AG04449 (cell line): ENCODE measurements at regions of chr5 and their contacts with region 1.

Region 1: DNA sequence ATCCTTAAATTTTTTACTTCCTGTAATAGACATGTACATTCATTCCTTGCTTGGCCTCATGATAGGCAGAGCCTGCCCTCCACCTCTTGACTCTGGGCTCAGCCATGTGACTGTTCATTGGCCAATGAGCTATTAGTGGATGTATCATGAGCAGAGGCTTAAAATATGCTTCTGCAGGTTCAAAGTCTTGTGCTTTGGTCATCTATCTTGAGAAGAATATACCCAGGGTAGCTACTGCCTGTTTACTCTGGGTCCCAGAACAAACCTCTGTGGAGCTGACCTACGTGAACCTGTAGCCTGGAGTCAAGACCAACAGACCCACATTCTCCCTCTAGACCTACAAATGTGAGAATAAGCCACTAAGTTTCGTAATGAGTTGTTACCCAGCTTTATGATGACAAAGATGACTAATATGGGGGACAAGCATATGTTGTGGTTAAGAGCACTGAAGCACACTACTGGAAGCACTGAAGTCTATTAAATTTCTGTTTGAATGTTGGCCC is 244.4 kb downstream of the MAST4 start:
- DNase-seq: no peak
- H3K4me3 ChIP-seq: no peak overlapping the region
- CTCF ChIP-seq: no peak

Region 2: DNA sequence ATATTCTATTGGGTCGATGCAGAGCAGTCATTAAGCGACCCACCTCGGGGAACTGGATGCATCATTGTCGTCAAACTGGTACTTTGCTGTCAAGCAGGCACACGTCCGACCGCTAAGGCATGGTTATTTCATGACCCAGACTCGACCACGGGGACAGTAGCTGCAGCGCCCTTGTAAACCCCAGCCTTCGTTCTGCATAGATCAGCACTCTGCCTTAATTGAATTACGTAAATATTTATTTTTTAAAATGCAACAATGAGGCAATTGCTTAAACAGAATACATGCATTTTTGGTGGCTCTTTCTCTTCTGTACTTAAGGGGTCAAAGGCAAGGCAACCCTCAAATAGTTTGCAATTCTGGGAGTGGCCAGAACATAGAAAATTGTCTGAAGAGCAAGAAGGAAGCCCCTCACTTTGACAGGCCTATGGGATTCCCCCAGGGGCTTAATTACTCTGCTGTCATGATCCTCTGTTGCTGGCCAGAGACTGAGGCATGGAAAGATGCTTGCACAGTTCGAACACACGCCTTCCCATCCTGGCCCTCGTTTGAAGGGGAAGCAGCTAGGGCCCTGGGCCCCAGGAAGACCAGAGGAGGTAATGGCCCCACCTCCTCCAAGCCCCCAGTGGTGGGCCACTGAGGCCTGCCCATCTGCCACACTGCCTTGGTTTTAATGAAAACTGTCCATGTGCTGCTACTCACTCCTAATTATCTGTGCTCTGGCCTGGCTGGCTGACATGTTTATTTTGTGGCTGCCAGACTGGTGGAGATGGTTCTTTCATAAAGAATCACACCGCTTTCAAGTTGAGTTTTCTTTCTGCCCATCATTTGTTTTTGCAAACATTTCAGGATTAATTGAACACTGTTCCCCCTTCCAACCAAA is 414.1 kb before region 1 on chr5:
- CTCF ChIA-PET with region 1: no interaction called
- POLR2A ChIA-PET with region 1: no interaction called
- DNase-seq: no peak
- H3K4me3 ChIP-seq: no peak overlapping the region
- CTCF ChIP-seq: no peak

Region 3: GRCh38 chr5:66828548-66829357 is 11.8 kb before region 1 on chr5:
- CTCF ChIA-PET with region 1: interaction called, 10 read pairs
- POLR2A ChIA-PET with region 1: no interaction called
- DNase-seq: no peak
- H3K4me3 ChIP-seq: peak overlapping the region; percentile 54
- CTCF ChIP-seq: no peak